AG04449 (cell line): ENCODE measurements at regions of chr17 and their contacts with region 1.

Region 1: DNA sequence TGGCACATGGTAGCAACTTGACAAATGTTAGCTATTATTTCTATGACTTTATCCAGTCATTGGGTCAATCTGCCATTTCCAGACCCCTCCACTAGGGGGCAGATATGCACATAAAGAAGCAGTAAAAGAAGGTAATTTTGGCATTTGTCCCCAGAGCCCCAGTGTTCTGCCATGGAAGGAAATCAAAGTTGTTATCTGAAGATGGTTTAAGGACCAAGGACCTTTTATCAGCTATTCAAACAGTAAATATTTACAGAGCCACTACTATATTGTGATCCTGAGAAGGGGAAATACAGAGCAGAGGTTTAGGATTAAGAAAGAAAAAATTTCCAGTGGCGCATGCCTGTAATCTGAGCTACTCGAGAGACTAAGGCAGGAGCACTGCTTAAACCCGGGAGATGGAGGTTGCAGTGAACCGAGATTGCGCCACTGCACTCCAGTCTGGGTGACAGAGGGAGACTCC is 20.0 kb downstream of the TRAF4 start:
- DNase-seq: peak; percentile 29
- H3K4me3 ChIP-seq: no peak overlapping the region
- CTCF ChIP-seq: peak; percentile 69

Region 2: DNA sequence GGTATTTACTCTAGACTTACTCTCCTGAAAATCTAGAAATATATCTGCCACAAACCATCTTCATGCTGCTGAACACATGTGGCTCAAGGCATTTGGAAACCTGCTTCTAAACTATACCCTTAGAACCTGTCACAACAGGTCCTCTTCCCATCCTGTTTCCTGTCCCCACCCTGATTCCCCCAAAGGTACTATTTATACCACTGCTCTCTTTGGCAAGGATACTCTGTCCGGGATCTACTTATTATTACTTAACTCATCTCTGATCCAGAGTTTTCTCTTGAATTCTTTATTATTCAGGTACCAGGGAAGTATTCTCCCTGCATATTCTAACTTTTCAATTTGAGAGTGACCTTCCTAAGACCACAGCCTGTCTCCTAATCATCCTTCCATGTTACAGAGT is 13.3 kb after region 1 on chr17:
- CTCF ChIA-PET with region 1: interaction called, 128 read pairs
- POLR2A ChIA-PET with region 1: interaction called, 3 read pairs
- DNase-seq: no peak
- H3K4me3 ChIP-seq: no peak overlapping the region
- CTCF ChIP-seq: no peak

Region 3: GRCh38 chr17:28812091-28812747 is 48.4 kb after region 1 on chr17:
- CTCF ChIA-PET with region 1: interaction called, 18 read pairs
- POLR2A ChIA-PET with region 1: no interaction called
- DNase-seq: peak; percentile 70
- H3K4me3 ChIP-seq: peak overlapping the region; percentile 90
- CTCF ChIP-seq: no peak

Region 4: GRCh38 chr17:28878981-28879380 is 115.1 kb after region 1 on chr17:
- CTCF ChIA-PET with region 1: interaction called, 39 read pairs
- POLR2A ChIA-PET with region 1: no interaction called
- DNase-seq: no peak
- H3K4me3 ChIP-seq: no peak overlapping the region
- CTCF ChIP-seq: peak; percentile 63

Region 5: DNA sequence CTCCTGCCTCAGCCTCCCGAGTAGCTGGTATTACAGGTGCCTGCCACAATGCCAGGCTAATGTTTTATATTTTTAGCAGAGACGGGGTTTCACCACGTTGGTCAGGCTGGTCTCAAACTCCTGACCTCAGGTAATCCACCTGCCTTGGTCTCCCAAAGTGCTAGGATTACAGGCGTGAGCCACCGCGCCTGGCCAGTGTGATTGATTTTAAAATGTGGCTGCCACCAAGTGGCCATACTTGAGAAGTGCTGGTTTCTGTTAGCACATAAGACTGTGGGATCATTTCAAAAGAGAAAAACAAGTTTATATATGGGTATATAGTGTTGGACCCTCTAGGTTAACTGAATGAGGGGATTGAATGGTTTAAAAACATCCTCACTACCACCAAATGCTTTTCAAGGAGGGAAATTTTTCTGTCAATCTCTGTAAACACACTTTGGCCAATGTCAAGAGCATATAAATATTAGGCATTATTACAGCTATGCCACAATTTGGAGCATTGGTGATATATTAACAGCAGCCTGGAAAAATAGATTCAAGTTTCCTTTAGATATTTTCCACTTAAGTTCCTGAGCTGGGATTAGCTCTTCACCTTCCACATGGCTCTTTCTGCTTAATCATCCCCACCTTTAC is 152.6 kb after region 1 on chr17:
- CTCF ChIA-PET with region 1: interaction called, 89 read pairs
- POLR2A ChIA-PET with region 1: no interaction called
- DNase-seq: no peak
- H3K4me3 ChIP-seq: no peak overlapping the region
- CTCF ChIP-seq: peak; percentile 44